MCF 10A (cell line): ENCODE measurements at regions of chr2 and their contacts with region 1.

Region 1: DNA sequence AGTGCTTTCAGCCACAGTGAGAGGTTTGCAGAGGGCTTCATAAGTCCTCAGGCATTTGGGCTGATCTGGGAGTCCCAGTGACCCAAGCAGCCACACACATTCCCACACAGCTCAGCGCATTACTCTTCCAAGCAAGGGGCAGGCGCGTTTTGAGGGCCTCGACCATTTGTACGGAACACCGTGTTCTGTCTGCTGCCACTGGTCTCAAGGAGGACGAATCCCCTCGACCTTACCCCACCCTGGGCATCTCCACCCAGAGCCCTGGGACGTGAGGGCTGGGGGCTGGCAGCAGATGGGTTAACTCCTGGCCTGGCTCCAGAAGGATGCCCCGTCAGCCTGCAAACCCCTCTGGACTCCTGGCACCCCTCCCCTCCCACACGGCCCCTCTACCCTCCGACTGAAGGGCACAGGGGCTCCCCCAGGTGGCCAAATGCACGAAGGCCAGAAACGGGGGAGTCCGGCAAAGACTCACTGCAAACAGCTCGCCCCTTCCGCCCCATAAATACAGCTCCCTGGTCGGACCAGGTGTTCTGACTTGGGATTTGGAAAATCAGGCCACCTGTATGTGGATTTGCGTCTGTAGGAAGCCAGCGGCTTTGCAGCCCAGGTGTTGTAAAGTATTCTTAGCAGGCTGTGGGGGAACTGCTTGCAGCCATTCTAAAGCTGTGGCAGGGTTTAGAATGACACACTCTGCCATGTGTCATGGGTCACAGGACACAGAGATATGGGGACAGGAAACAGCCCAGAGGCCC is 33.6 kb upstream of the PTMA start:
- DNase-seq: peak; percentile 67
- H3K4me3 Mint-ChIP-seq: no peak overlapping the region
- H3K27ac Mint-ChIP-seq: no peak overlapping the region
- H3K4me1 Mint-ChIP-seq: peaks cover 19% of the 10 kb centered on the region
- H3K27me3 Mint-ChIP-seq: no peaks in the 10 kb centered on the region
- CTCF ChIP-seq: peak; percentile 83

Region 2: GRCh38 chr2:231321556-231322334 is 353.0 kb before region 1 on chr2:
- CTCF ChIA-PET with region 1: no interaction called
- POLR2A ChIA-PET with region 1: no interaction called
- intact Hi-C with region 1: no loop called
- DNase-seq: no peak
- H3K4me3 Mint-ChIP-seq: no peak overlapping the region
- H3K27ac Mint-ChIP-seq: no peak overlapping the region
- H3K4me1 Mint-ChIP-seq: no peaks in the 10 kb centered on the region
- H3K27me3 Mint-ChIP-seq: no peaks in the 10 kb centered on the region
- CTCF ChIP-seq: no peak

Region 3: DNA sequence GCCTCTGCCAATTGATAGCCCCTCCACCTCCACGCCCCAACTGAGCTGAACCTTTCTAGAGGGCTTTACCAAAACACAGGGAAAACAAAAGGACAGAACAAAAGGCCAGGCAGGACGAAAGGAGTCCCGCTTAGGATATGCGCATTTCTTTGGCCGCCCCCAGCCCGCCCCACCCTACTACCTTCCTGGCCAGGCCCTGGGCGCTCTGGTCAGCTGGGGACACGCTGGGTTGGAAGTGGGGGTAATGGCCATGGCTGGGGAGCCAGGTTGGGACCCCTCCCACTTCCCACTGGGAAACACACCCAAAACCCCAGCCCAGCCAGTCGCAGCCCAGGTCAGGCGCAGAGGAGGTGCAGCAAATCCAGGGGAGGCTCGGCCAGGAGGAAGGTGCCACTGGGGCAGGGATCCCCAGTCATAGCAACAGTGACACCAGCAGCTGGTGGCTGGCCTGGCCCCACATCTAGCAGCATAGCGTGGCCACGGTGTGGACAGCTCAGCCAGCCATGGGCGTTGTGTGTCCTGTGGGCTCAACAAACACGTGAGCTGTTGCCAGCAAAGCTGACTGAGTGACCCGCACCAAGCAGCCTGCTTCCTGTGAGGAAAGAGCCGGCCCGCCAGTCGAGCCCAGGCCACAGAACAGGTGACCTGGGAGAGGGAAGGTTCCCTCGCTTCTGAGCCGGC is 303.9 kb before region 1 on chr2:
- CTCF ChIA-PET with region 1: no interaction called
- POLR2A ChIA-PET with region 1: no interaction called
- intact Hi-C with region 1: no loop called
- DNase-seq: no peak
- H3K4me3 Mint-ChIP-seq: no peak overlapping the region
- H3K27ac Mint-ChIP-seq: no peak overlapping the region
- H3K4me1 Mint-ChIP-seq: peaks cover 6% of the 10 kb centered on the region
- H3K27me3 Mint-ChIP-seq: no peaks in the 10 kb centered on the region
- CTCF ChIP-seq: no peak

Region 4: GRCh38 chr2:231612179-231613053 is 62.3 kb before region 1 on chr2:
- CTCF ChIA-PET with region 1: interaction called, 216 read pairs
- POLR2A ChIA-PET with region 1: interaction called, 73 read pairs
- intact Hi-C with region 1: loop called (anchors 1 kb)
- DNase-seq: peak; percentile 95
- H3K4me3 Mint-ChIP-seq: peak overlapping the region; percentile 63
- H3K27ac Mint-ChIP-seq: peak overlapping the region; percentile 92
- H3K4me1 Mint-ChIP-seq: peaks cover 38% of the 10 kb centered on the region
- H3K27me3 Mint-ChIP-seq: no peaks in the 10 kb centered on the region
- CTCF ChIP-seq: peak; percentile 95

Region 5: GRCh38 chr2:231648587-231649174 is 26.1 kb before region 1 on chr2:
- CTCF ChIA-PET with region 1: interaction called, 123 read pairs
- POLR2A ChIA-PET with region 1: interaction called, 6 read pairs
- intact Hi-C with region 1: loop called (anchors 1 kb)
- DNase-seq: peak; percentile 86
- H3K4me3 Mint-ChIP-seq: no peak overlapping the region
- H3K27ac Mint-ChIP-seq: no peak overlapping the region
- H3K4me1 Mint-ChIP-seq: peaks cover 16% of the 10 kb centered on the region
- H3K27me3 Mint-ChIP-seq: no peaks in the 10 kb centered on the region
- CTCF ChIP-seq: peak; percentile 73

Region 6: GRCh38 chr2:231687133-231687852 is 12.5 kb after region 1 on chr2:
- CTCF ChIA-PET with region 1: interaction called, 27 read pairs
- POLR2A ChIA-PET with region 1: no interaction called
- intact Hi-C with region 1: no loop called
- DNase-seq: peak; percentile 71
- H3K4me3 Mint-ChIP-seq: no peak overlapping the region
- H3K27ac Mint-ChIP-seq: no peak overlapping the region
- H3K4me1 Mint-ChIP-seq: peaks cover 3% of the 10 kb centered on the region
- H3K27me3 Mint-ChIP-seq: no peaks in the 10 kb centered on the region
- CTCF ChIP-seq: no peak

Region 7: DNA sequence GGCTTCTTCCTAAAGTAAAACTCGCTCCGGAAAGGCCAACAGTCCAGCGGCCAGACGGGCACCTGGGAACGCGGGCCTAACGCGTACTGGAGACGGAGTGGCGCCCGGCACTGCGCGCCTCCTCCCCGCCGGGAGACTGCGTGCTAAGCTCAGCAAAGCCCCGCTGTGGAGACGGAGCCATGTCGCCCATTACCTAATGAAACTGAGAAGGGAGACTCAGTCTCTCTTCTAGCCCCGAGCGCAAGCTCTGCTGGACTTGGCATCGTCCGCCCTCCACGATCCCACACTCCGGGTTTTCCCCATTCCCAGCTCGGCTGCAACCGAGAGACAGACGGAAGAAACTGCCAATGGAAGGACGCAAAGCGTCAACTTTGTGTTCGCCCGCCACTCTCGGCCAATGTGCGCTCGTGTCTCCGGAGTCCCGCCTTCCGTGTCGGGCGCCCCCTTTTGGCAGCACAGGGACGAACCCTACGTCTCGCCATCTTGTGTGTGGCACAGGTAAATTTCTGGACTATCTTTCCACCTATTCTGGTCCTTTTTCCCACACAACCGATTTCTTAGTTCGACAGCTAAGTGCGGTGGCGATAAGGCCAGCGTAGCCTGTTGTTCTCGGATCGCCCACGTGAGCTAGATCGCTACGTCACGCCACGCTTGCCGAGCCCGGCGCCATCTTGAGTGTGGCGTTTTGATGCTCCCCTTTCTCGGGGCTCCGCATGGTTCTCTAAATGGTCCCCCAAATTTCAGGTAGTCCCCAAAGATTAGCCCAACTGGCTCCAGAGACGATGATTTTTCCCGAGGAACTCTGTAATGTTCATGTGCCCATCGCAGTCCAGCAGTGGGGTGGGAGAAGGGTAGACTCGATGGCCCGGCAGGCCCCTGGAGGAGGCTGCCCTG is 32.2 kb after region 1 on chr2:
- CTCF ChIA-PET with region 1: interaction called, 352 read pairs
- POLR2A ChIA-PET with region 1: interaction called, 14 read pairs
- intact Hi-C with region 1: no loop called
- DNase-seq: peak; percentile 99
- H3K4me3 Mint-ChIP-seq: peak overlapping the region; percentile 89
- H3K27ac Mint-ChIP-seq: peak overlapping the region; percentile 100
- H3K4me1 Mint-ChIP-seq: peaks cover 9% of the 10 kb centered on the region
- H3K27me3 Mint-ChIP-seq: no peaks in the 10 kb centered on the region
- CTCF ChIP-seq: peak; percentile 85

Region 8: DNA sequence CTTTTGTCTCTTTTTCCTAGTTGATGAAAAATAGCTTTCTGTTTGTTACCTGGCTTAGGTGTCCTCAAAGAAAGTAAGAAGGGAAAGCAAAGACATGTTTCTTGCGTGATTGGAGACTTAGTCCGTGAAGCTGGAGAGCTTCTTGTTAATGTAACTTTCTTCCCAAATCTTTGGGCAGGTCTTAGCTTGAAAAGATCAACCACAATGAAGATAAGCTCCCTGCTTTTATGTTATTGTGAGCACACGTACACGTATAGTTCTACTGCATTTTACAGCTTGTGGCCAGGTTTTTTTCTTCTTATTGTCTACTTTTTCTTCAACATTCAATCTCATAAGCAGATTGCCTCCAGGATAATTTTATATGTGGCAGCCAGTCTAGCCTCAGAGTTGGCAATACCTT is 386.5 kb after region 1 on chr2:
- CTCF ChIA-PET with region 1: no interaction called
- POLR2A ChIA-PET with region 1: no interaction called
- intact Hi-C with region 1: no loop called
- DNase-seq: no peak
- H3K4me3 Mint-ChIP-seq: no peak overlapping the region
- H3K27ac Mint-ChIP-seq: no peak overlapping the region
- H3K4me1 Mint-ChIP-seq: peaks cover 7% of the 10 kb centered on the region
- H3K27me3 Mint-ChIP-seq: no peaks in the 10 kb centered on the region
- CTCF ChIP-seq: no peak